Breast epithelium (tissue), 4 donors: ENCODE measurements at regions of chr20 and their contacts with region 1.

Region 1: DNA sequence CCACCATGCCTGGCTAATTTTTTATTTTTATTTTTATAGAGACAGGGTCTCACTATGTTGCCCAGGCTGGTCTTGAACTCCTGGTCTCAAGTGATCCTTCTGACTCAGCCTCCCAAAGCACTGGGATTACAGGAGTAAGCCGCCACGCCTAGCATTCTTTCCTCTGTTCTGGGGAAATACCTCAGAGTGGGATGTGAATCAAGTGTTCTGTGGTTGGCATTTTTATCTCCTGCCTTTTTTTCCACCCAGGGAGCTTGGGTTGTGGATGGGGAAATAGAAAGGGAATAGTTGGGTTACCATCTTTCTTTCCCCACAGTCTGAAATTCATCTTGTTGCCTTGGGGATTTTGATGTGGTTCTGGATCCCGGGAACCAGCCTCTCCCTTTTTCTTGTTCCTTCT is 24.1 kb downstream of the TFAP2C start:
- DNase-seq: no peak
- H3K4me3 ChIP-seq: no peak overlapping the region
- H3K27ac ChIP-seq: no peak overlapping the region
- H3K4me1 ChIP-seq: no peaks in the 10 kb centered on the region
- H3K27me3 ChIP-seq: no peaks in the 10 kb centered on the region
- CTCF ChIP-seq: no peak
- POLR2A ChIP-seq: no peak

Region 2: GRCh38 chr20:54759692-54760145 is 1893.5 kb before region 1 on chr20:
- intact Hi-C with region 1: loop called (anchors 10 kb)
- DNase-seq: no peak
- H3K4me3 ChIP-seq: no peak overlapping the region
- H3K27ac ChIP-seq: no peak overlapping the region
- H3K4me1 ChIP-seq: no peaks in the 10 kb centered on the region
- H3K27me3 ChIP-seq: no peaks in the 10 kb centered on the region
- CTCF ChIP-seq: no peak
- POLR2A ChIP-seq: no peak

Region 3: GRCh38 chr20:56362833-56363413 is 290.3 kb before region 1 on chr20:
- intact Hi-C with region 1: no loop called
- DNase-seq: peak in 1 of 2 donors; percentile 30
- H3K4me3 ChIP-seq: peak overlapping the region in 2 of 3 donors; percentile 4 to 17
- H3K27ac ChIP-seq: peak overlapping the region; percentile 23 to 52
- H3K4me1 ChIP-seq: peaks cover 7 to 9% of the 10 kb centered on the region in 2 donors
- H3K27me3 ChIP-seq: no peaks in the 10 kb centered on the region
- CTCF ChIP-seq: no peak
- POLR2A ChIP-seq: no peak

Region 4: DNA sequence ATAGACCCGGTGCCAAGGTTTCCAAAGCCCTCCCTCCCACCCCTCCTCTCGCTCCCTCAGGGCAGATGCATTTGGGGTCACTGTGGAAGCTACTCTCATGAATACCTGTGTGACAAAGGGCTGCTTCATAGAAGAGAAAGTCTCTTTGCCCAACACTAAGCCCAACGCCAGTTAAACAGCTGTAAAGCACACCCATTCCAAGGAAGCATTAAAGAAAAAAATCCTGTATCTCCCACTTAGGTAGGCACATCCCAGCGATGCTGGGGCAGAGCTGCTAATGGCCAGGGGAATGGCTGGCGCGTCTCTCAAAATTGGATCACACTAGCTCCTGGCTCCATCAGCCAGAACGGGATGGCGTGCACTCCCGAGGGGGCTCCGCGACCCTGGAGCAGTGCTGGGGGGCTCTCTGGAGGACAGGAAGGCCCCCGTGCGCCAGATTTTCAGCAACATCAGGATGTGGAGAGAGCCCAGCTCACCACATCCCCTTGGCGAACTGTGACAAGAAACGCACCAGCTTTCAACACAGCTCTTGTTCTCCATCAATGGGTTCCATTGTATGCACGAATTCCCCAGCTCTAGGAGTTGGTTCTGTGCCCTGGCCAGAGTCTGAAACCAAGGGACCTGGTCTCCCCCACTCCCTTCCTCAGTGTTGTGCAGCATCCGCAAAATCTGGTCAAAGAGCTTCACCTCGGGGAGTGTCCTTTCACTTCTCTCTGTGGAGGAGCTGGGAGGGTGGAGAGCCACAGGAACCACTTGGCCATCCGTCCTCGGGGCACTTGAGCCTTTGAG is 49.9 kb after region 1 on chr20:
- intact Hi-C with region 1: no loop called
- DNase-seq: peak in 1 of 2 donors; percentile 93
- H3K4me3 ChIP-seq: peak overlapping the region in 1 of 3 donors; percentile 45
- H3K27ac ChIP-seq: peak overlapping the region; percentile 91 to 94
- H3K4me1 ChIP-seq: peaks cover 0 to 5% of the 10 kb centered on the region in 2 donors
- H3K27me3 ChIP-seq: no peaks in the 10 kb centered on the region
- CTCF ChIP-seq: no peak
- POLR2A ChIP-seq: no peak